Lower leg skin (tissue), 4 donors: ENCODE measurements at regions of chr19 and their contacts with region 1.

Region 1: GRCh38 chr19:13718733-13719132 is 45.6 kb upstream of the MRI1 start:
- DNase-seq: no peak
- H3K4me3 ChIP-seq: no peak overlapping the region
- CTCF ChIP-seq: no peak
- POLR2A ChIP-seq: no peak

Region 2: DNA sequence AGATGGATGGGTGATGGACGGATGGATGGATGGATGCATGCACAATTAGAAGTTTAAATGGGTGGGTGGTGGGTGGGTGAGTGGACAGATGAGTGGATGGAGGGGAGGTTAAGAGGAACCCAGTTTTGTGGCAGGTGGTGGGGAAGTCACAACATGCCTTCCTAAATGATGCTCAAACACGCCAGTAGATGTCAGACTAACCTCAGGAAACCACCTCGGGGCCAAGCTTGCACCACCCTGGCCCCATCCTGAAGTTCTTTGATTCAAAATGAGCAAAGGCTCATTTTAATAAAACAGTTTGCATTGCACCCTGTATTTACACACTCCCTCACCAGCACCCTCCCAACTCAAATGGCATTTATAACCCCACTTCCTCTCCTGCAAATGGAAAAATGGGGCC is 121.1 kb before region 1 on chr19:
- intact Hi-C with region 1: loop called (anchors 5 kb)
- DNase-seq: peak in 1 of 2 donors; percentile 27
- H3K4me3 ChIP-seq: no peak overlapping the region
- CTCF ChIP-seq: no peak
- POLR2A ChIP-seq: no peak